Activated T-helper 2 cell treated with anti-CD3 and anti-CD28 coated beads, Interferon-gamma antibody, Interleukin-2, Interleukin-4, amounts not matched to agents 10 μg/mL and 5 μg/mL and 100 μg/mL, durations not matched to agents 14 hours and 24 hours and 36 hours (primary cell): ENCODE measurements at regions of chr11 and their contacts with region 1.

Region 1: GRCh38 chr11:125887373-125888324 is at the start of gene HYLS1:
- DNase-seq: peak; percentile 99
- H3K4me3 Mint-ChIP-seq: peak within 1 kb of the TSS; percentile 86
- H3K27ac Mint-ChIP-seq: peak within 1 kb of the TSS; percentile 98
- H3K4me1 Mint-ChIP-seq: peaks cover 42% of the 10 kb centered on the region
- H3K27me3 Mint-ChIP-seq: no peaks in the 10 kb centered on the region
- total RNA-seq, gene HYLS1: 12.0 and 12.5 TPM in 2 replicates

Region 2: DNA sequence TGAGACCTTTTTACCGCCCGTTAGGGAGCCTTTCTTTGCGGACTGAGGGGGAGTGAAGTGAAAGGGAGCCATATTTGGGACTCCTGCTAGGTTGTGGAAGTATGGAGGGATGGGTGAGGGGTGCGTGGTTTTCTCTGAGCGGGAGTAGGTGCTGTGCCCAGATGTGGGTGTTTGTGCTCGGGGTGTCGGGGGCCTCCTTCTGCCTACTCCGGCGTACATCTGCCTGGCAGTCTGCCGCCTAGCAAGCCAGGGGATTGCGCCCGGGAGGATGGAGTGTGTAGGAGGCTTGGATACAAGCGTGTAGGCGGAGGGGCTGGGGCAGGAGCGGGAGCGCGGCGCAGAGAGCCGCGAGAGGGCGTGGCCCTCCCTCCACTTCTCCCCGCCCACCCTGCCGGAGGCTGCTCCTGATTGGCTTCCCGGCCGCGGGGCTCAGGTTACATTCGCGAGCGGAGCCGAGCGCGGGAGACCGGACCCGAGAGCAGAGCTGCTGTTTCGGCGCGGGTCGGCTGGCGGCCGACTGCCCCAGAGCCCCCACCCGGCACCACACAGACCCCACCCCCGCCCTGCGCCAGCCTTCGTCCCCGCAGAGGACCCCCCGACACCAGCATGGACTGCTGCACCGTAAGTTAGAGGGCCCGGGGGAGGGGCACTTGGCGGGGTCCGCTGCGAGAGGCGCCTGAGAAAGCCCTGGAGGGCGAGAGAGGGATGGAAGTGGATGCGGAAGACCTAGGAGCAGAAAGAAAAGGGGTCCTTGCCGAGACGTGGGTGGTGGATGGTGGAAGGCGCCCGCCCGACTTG is 1148.0 kb before region 1 on chr11 and contains the start of gene NRGN:
- intact Hi-C with region 1: loop called (anchors 10 kb)
- DNase-seq: peak; percentile 76
- H3K4me3 Mint-ChIP-seq: peak within 1 kb of the TSS; percentile 72
- H3K27ac Mint-ChIP-seq: no peak within 1 kb of the TSS
- H3K4me1 Mint-ChIP-seq: peaks cover 14% of the 10 kb centered on the region
- H3K27me3 Mint-ChIP-seq: peaks cover 48% of the 10 kb centered on the region
- total RNA-seq, gene NRGN: 5.0 and 6.7 TPM in 2 replicates

Region 3: GRCh38 chr11:125568970-125569914 is 318.4 kb before region 1 on chr11 and contains the start of gene EI24:
- intact Hi-C with region 1: loop called (anchors 1 kb)
- DNase-seq: peak; percentile 86
- H3K4me3 Mint-ChIP-seq: peak within 1 kb of the TSS; percentile 89
- H3K27ac Mint-ChIP-seq: peak within 1 kb of the TSS; percentile 91
- H3K4me1 Mint-ChIP-seq: peaks cover 22% of the 10 kb centered on the region
- H3K27me3 Mint-ChIP-seq: no peaks in the 10 kb centered on the region
- total RNA-seq, gene EI24: 44.4 and 50.9 TPM in 2 replicates

Region 4: DNA sequence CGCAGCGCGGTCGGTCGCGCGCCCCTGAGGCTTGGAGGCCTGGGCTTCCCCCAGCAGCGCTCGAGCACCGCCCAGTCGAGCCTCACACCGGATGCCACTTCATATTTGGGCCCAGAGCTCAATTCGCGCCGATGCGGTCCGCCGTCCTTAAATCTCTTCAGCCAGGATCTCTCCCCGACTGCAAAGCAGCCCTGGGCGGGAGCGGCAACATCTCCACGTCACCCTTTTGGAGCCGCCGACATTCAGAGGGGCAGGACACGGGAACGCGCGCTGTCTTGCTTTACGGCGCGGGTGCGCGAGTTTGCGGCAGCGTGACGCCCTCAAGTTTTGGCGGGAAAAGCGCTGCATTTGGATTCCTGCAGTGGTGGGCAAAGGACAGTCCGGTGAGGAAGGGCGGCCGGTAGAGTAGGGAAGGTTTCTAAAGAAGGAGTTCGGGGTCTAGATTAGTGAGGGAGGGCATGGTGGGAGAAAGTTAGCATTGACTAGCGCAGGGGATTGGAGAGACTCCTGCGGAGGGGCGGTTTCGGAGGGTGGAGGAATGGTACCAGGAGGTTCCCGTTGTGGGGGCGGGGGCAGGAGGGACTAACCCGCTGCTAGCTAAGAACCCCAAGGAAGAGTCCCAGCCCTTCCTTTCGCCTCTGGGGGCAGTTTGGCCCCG is 261.9 kb before region 1 on chr11:
- intact Hi-C with region 1: loop called (anchors 2 kb)
- DNase-seq: peak; percentile 85
- H3K4me3 Mint-ChIP-seq: peak overlapping the region; percentile 91
- H3K27ac Mint-ChIP-seq: peak overlapping the region; percentile 93
- H3K4me1 Mint-ChIP-seq: peaks cover 28% of the 10 kb centered on the region
- H3K27me3 Mint-ChIP-seq: no peaks in the 10 kb centered on the region

Region 5: DNA sequence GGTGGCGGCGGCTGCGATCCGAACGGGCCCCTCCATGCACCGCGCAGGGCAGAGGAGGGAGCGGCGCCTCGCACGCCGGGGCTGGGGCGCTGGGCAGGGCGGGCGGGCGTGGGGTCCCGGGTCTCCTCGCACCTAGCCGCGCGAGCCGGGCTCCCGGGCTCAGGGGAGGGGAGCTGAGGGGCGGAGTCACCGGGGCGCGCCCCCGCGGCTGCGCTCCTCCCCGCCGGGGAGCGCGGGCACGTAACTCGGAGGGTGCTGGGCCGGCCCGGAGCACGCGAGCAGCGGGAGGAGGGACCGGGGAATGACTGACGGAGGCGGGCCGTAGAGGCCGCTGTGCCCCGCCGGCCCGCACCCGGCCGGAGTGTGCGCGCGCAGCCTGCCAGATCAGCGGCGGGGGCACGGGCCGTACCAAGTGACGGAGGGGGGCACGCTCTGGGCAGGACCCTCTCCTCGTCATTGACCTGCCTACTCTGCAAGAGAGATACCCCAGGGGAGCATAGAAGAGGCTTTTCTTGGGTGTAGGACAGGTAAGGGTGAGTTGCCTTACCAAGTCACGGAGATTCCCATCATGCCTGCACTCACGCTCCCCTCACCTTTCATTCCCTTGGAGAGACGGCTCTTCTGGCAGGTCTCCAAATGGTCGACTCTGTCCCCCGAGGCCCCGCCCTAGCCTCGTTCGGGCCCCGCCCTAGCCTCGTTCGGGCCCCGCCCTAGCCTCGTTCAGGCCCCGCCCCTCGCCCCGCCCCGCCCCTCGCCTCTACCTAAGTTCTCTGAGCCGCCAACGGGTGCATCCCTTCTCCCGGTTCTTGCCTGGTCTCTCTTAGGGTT is 175.2 kb after region 1 on chr11 and contains the start of gene CDON:
- intact Hi-C with region 1: loop called (anchors 2 kb)
- DNase-seq: peak; percentile 90
- H3K4me3 Mint-ChIP-seq: peak within 1 kb of the TSS; percentile 81
- H3K27ac Mint-ChIP-seq: peak within 1 kb of the TSS; percentile 97
- H3K4me1 Mint-ChIP-seq: peaks cover 13% of the 10 kb centered on the region
- H3K27me3 Mint-ChIP-seq: peaks cover 46% of the 10 kb centered on the region
- total RNA-seq, gene CDON: 3.2 and 3.5 TPM in 2 replicates